Activated B cell treated with CpG ODN at 0.5 μM for 24 hours (primary cell): ENCODE measurements at regions of chr3 and their contacts with region 1.

Region 1: GRCh38 chr3:69579306-69580041 is 159.8 kb upstream of the MITF start:
- DNase-seq: no peak
- ATAC-seq: no peak
- H3K4me3 Mint-ChIP-seq: no peak overlapping the region
- H3K27ac Mint-ChIP-seq: no peak overlapping the region
- H3K4me1 Mint-ChIP-seq: no peaks in the 10 kb centered on the region
- H3K27me3 Mint-ChIP-seq: peaks cover 4% of the 10 kb centered on the region
- CTCF ChIP-seq: no peak

Region 2: DNA sequence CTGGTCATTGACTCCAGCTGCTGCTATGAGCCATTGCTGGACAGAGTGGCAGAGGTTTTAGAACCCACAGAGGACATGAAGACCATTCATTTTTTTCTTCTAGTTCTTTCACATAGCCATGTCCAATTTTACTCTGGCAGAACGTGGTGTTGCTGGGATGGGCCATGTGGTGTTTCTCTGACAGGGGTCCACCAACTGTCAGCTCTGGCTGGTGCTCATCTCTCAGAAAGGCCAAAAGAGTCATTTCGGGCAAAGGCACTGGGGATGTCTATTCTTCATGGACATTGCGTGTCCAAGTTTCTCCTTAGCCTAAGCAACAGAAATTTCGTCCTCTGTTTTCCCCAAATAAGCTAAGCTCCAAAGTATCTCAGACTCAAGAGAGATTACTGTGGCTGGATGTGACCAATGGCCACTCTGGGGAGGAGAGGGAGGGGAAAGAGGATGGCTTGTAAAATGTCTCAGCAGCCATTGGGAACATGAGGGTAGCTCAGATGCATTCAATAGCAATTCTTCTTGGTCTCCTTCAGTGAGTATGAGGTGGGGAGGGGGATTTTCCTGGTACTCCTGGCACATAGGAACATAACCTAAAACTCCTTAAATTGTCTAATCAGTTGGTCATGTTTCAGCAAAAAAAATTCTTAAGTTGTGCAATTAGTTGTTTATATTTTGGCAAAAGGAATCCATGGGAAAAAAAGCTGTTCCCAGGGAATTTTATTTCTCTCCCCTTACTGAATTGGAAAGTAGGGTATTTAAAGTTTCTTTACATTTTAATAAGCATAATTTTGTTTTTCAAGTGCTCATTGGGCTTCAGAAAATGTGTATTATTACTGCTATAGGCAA is 28.2 kb after region 1 on chr3:
- CTCF ChIA-PET with region 1: no interaction called
- POLR2A ChIA-PET with region 1: interaction called, 11 read pairs
- intact Hi-C with region 1: no loop called
- DNase-seq: no peak
- ATAC-seq: no peak
- H3K4me3 Mint-ChIP-seq: no peak overlapping the region
- H3K27ac Mint-ChIP-seq: no peak overlapping the region
- H3K4me1 Mint-ChIP-seq: no peaks in the 10 kb centered on the region
- H3K27me3 Mint-ChIP-seq: no peaks in the 10 kb centered on the region
- CTCF ChIP-seq: no peak